Dorsolateral prefrontal cortex (tissue), 120 donors: ENCODE measurements at regions of chr3 and their contacts with region 1.

Region 1: DNA sequence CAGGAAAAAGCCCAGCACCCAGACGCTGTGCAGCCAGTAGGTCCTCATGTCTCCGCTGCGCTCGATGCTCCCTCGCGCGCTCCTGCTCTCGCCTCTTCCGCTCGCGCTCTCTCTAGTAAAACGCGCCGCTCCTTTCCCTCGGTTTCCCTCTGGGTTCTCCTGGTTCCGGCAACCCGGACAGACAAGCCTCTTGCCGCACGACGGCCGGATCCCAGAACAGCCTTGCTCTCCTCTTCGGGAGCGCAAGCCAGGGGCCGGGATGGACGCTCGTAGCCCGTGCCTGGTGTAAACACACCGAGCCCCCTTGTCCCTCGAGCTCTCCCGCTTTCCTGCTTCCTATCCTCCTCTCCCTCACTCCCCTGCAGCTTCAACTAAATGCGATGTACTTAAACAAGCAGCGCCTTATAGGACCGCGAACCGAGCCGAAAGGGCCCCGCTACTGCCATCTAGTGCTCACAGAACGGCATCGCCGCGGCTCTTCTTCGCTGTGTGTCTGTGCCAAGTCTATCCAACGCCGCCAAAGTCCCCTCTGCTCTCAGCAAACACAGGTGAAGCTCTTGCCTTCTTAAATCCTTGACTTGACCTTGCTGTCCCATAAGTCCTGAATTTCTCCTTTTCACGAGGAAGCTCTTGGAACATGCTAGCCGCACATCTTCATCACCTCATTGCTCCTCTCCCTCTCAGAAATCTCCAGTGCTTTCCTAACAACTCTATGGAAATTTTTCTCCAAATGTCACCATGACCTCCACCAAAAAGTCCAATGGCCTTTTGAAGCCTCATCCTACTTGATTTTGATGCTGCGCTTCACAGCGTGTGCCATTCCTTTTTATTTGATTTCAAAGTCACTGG is 1037.2 kb downstream of the IGSF11 start:
- DNase-seq: peak; percentile 54 to 91 (median 86)
- H3K4me3 ChIP-seq: peak overlapping the region; percentile 53 to 93 (median 77)
- H3K27ac ChIP-seq: peak overlapping the region in 58 of 59 donors; percentile 45 to 95 (median 85)
- H3K27me3 ChIP-seq: no peaks in the 10 kb centered on the region
- CTCF ChIP-seq: peak; percentile 68 to 96 (median 91)

Region 2: GRCh38 chr3:116863822-116864589 is 1133.4 kb before region 1 on chr3:
- intact Hi-C with region 1: loop called in 1 of 2 experiments (anchors 5 kb)
- DNase-seq: peak in 4 of 10 donors; percentile 4 to 40 (median 33)
- H3K4me3 ChIP-seq: peak overlapping the region; percentile 17 to 72 (median 52)
- H3K27ac ChIP-seq: peak overlapping the region in 15 of 59 donors; percentile 2 to 75 (median 34)
- H3K27me3 ChIP-seq: no peaks in the 10 kb centered on the region
- CTCF ChIP-seq: peak; percentile 40 to 81 (median 64)

Region 3: GRCh38 chr3:118400886-118401285 is 403.5 kb after region 1 on chr3:
- intact Hi-C with region 1: no loop called
- DNase-seq: no peak
- H3K4me3 ChIP-seq: no peak overlapping the region
- H3K27ac ChIP-seq: no peak overlapping the region
- H3K27me3 ChIP-seq: no peaks in the 10 kb centered on the region
- CTCF ChIP-seq: no peak